HepG2 (cell line): ENCODE measurements at regions of chr6 and their contacts with region 1.

Region 1: GRCh38 chr6:97978855-97979271 is 695.8 kb upstream of the MMS22L start:
- DNase-seq: peak; percentile 25
- ATAC-seq: peak; percentile 100
- H3K4me3 ChIP-seq: no peak overlapping the region
- H3K27ac ChIP-seq: no peak overlapping the region
- H3K4me1 ChIP-seq: no peaks in the 10 kb centered on the region
- H3K27me3 ChIP-seq: no peaks in the 10 kb centered on the region; a peak in 1 of 5 replicates
- CTCF ChIP-seq: peak; percentile 63
- EP300 ChIP-seq: no peak
- POLR2A ChIP-seq: no peak
- RAD21 ChIP-seq: no peak

Region 2: GRCh38 chr6:97068211-97068610 is 910.7 kb before region 1 on chr6:
- CTCF ChIA-PET with region 1: no interaction called
- POLR2A ChIA-PET with region 1: no interaction called
- in situ Hi-C with region 1: no loop called
- intact Hi-C with region 1: loop called (anchors 2 kb)
- DNase-seq: peak; percentile 3
- ATAC-seq: no peak
- H3K4me3 ChIP-seq: no peak overlapping the region
- H3K27ac ChIP-seq: no peak overlapping the region
- H3K4me1 ChIP-seq: no peaks in the 10 kb centered on the region
- H3K27me3 ChIP-seq: no peaks in the 10 kb centered on the region
- CTCF ChIP-seq: peak; percentile 39
- EP300 ChIP-seq: no peak
- POLR2A ChIP-seq: no peak
- RAD21 ChIP-seq: no peak

Region 3: DNA sequence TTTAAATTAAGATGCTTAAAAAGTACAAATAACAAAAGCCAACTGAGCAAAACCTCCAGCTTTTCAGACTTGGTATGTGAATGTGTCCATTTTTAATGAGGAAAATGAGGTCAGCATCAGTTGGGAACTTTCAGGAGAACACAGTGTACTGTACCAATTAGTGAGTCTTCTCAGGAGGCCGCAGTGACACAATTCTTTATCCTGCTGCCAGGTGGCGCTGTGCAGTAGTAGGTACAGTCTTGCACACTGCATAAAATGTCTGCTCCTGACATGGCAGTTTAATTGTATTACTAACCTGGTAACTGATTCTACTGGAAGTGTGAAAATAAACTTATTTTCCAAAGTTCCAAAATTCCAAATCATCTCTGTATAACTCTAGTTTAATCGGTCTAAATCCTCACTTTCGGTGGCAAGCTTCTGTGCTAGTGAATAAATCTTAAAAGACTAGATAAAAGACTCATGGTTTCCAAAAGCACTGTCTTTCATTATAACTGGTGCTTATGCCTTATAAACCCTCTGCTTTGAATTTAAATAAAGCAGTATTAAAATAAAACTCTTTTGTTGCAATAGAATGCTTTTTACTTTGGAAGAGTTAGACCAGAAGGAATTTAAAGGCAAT is 481.0 kb before region 1 on chr6:
- CTCF ChIA-PET with region 1: no interaction called
- POLR2A ChIA-PET with region 1: no interaction called
- in situ Hi-C with region 1: no loop called
- intact Hi-C with region 1: loop called (anchors 2 kb)
- DNase-seq: peak; percentile 59
- ATAC-seq: peak; percentile 99
- H3K4me3 ChIP-seq: no peak overlapping the region
- H3K27ac ChIP-seq: no peak overlapping the region
- H3K4me1 ChIP-seq: no peaks in the 10 kb centered on the region
- H3K27me3 ChIP-seq: no peaks in the 10 kb centered on the region
- CTCF ChIP-seq: peak; percentile 81
- EP300 ChIP-seq: no peak
- POLR2A ChIP-seq: no peak
- RAD21 ChIP-seq: peak; percentile 43; the same call in 1 of the 2 replicates

Region 4: DNA sequence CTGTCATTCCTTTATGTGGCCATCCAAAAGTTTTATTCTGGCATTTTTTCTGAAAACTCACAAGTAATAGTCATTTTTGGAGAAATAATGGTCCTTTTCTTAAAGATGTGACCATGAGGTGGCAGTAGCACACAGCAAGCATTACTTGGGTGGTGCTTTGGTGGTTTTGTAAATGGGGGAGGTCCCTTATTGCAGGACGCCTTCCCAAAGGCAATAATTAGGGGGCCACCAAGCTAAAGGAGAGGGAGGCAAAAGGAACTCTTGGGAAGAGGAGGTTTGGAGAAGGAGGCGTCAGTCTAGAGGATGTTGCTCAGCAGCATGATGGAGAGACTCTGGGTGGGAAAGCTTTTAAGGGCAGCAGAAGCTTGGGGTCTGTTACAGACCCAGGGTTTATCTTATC is 273.3 kb before region 1 on chr6:
- CTCF ChIA-PET with region 1: no interaction called
- POLR2A ChIA-PET with region 1: no interaction called
- in situ Hi-C with region 1: no loop called
- intact Hi-C with region 1: loop called (anchors 1 kb)
- DNase-seq: peak; percentile 5
- ATAC-seq: no peak
- H3K4me3 ChIP-seq: no peak overlapping the region
- H3K27ac ChIP-seq: no peak overlapping the region
- H3K4me1 ChIP-seq: no peaks in the 10 kb centered on the region
- H3K27me3 ChIP-seq: no peaks in the 10 kb centered on the region
- CTCF ChIP-seq: peak; percentile 33
- EP300 ChIP-seq: no peak
- POLR2A ChIP-seq: no peak
- RAD21 ChIP-seq: no peak

Region 5: GRCh38 chr6:98124171-98124570 is 145.3 kb after region 1 on chr6:
- CTCF ChIA-PET with region 1: no interaction called
- POLR2A ChIA-PET with region 1: no interaction called
- in situ Hi-C with region 1: no loop called
- intact Hi-C with region 1: no loop called
- DNase-seq: no peak
- ATAC-seq: no peak
- H3K4me3 ChIP-seq: no peak overlapping the region
- H3K27ac ChIP-seq: no peak overlapping the region
- H3K4me1 ChIP-seq: no peaks in the 10 kb centered on the region
- H3K27me3 ChIP-seq: no peaks in the 10 kb centered on the region
- CTCF ChIP-seq: no peak
- EP300 ChIP-seq: no peak
- POLR2A ChIP-seq: no peak
- RAD21 ChIP-seq: no peak